Activated T-helper 1 cell treated with anti-CD3 and anti-CD28 coated beads, Interleukin-12 subunit alpha, Interleukin-12 subunit beta, Interleukin-2, Interleukin-4 antibody, amounts not matched to agents 30 ng/mL and 10 ng/mL and 1 ng/mL, durations not matched to agents 14 hours and 24 hours and 36 hours (primary cell): ENCODE measurements at regions of chr7 and their contacts with region 1.

Region 1: GRCh38 chr7:44460325-44460724 is 30.1 kb downstream of the NUDCD3 start:
- DNase-seq: peak; percentile 57
- H3K4me3 Mint-ChIP-seq: peak overlapping the region; percentile 40
- H3K27ac Mint-ChIP-seq: peak overlapping the region; percentile 76
- H3K4me1 Mint-ChIP-seq: peaks cover 59% of the 10 kb centered on the region
- H3K27me3 Mint-ChIP-seq: no peaks in the 10 kb centered on the region

Region 2: DNA sequence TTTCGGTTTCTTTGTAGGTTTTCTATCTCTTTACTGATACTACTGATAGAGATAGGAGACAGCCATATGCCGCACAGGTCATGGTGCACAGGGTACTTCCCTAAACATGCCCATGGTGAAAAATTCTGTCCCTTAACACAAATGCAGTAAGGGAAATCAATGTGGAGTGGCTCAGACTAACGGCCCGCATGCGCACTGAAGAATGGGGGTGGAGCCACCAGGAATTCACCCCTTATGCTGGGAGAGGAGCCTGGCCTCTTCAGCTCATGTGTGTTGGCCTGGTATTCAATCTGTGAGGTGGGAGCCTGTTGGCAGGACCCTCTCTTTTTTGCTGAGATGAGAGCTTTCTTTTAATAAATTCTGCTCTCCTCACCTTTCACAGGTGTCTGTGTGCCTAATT is 545.5 kb before region 1 on chr7:
- intact Hi-C with region 1: no loop called
- DNase-seq: no peak
- H3K4me3 Mint-ChIP-seq: no peak overlapping the region
- H3K27ac Mint-ChIP-seq: no peak overlapping the region
- H3K4me1 Mint-ChIP-seq: no peaks in the 10 kb centered on the region
- H3K27me3 Mint-ChIP-seq: peaks cover 2% of the 10 kb centered on the region

Region 3: GRCh38 chr7:44200647-44201461 is 259.5 kb before region 1 on chr7 and contains the start of gene YKT6:
- intact Hi-C with region 1: loop called (anchors 1 kb)
- DNase-seq: peak; percentile 94
- H3K4me3 Mint-ChIP-seq: peak within 1 kb of the TSS; percentile 88
- H3K27ac Mint-ChIP-seq: peak within 1 kb of the TSS; percentile 52
- H3K4me1 Mint-ChIP-seq: peaks cover 37% of the 10 kb centered on the region
- H3K27me3 Mint-ChIP-seq: no peaks in the 10 kb centered on the region
- total RNA-seq, gene YKT6: 91.8 and 92.1 TPM in 2 replicates

Region 4: DNA sequence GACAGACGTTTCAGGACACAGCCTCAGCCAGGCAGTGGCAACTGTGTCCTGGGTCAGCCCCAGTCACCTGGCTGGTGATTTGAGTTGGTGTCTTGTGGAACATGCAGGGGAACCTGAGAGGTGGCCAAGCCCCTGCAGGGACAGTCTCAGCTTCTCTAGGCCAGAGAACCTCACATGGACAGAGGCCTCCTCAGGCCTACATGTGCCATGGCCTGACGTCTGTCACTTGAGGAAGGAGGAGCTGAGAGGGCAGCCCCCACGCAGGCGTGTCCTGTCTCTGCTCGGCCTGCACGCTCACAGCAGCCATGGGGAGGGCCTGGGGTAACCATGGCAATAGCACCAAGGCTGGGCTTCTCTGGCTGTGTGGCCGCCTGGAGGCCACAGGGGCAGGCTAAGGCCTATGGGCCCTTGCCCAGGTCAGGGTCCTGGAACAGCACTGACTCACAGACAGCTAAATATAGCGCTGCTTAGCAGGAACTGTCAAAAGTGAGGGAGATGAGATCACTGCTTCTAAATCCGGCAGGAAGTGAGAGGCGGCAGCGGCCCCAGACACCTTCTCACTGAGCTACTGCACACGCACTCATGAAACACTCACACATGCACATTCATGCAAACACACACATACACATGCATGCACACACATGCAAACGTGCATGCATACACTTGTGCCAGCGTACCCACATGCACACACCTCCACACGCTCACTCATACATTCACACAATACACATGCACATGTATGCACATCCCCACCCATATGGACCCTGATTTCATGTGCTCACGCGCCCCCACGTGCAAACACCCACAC is 202.5 kb before region 1 on chr7:
- intact Hi-C with region 1: loop called (anchors 1 kb)
- DNase-seq: peak; percentile 69
- H3K4me3 Mint-ChIP-seq: peak overlapping the region; percentile 56
- H3K27ac Mint-ChIP-seq: peak overlapping the region; percentile 78
- H3K4me1 Mint-ChIP-seq: peaks cover 34% of the 10 kb centered on the region
- H3K27me3 Mint-ChIP-seq: no peaks in the 10 kb centered on the region

Region 5: DNA sequence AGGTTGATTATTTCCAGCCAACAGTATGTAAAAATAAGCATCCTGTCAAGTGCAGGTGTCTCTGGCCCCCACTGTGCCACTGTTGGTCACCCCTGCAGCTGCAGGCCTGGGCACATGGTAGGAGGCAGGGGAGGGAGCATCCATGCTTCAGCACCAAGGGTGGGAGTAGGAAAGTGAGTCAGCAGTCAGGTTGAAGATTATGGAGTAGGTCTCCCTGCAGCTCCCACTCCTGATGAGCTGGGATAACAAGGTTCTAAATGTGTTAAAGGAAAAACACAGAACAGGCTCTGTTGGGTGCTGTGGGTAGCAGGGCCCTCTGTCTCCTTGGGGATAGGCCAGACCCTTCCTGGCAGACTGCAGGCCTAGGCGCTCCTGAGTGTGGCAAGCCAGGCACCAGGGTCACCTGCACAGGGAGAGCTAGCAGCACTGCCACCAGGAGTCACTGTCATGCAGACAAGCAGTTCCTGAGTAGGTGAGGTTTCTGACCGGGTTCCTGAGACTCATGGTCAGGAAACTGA is 29.2 kb before region 1 on chr7:
- intact Hi-C with region 1: loop called (anchors 1 kb)
- DNase-seq: no peak
- H3K4me3 Mint-ChIP-seq: no peak overlapping the region
- H3K27ac Mint-ChIP-seq: no peak overlapping the region
- H3K4me1 Mint-ChIP-seq: peaks cover 13% of the 10 kb centered on the region
- H3K27me3 Mint-ChIP-seq: no peaks in the 10 kb centered on the region